ENCODE measurements at regions of chrX and their contacts with region 1.

Region 1: DNA sequence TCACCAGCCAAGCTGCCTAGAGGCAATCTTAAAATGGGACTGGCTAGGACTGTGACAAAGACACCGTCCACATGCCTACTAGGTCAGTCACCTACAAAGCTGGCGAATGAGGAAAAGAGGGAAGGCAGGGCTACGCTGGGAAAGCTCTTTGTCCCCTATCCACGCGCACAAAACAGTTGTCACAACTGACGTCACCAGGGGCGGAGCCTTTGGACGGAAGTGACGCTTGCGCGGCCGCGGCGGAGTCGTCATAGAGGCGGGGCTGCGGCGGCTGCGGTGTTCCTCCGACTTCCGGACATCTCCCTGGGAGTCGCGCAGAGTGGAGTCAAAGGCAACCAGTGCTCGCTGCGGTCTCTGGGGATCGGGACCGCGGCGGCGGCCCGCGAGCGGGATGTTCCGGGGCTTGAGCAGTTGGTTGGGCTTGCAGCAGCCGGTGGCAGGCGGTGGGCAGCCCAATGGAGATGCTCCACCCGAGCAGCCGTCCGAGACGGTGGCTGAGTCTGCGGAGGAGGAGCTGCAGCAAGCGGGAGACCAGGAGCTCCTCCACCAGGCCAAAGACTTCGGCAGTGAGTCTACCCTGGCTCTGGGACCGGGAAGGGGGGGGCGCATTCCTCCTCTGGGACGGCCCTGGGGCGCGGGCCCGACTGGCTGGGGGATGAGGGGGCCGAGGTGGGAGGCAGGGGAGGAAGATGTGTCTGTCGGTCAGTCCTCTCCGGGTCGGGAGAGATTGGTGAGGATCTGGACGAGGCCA is at the start of gene SYAP1:
- DNase-seq: peak; percentile 78
- H3K4me3 ChIP-seq: peak within 1 kb of the TSS; percentile 59 to 92 (median 71)
- H3K27ac ChIP-seq: peak within 1 kb of the TSS; percentile 90 to 97 (median 93)
- H3K4me1 ChIP-seq: peaks cover 11 to 27% (median 13%) of the 10 kb centered on the region in 3 donors
- H3K27me3 ChIP-seq: no peaks in the 10 kb centered on the region
- CTCF ChIP-seq: no peak
- POLR2A ChIP-seq: peak in 3 of 4 donors; percentile 91 to 96 (median 95)
- total RNA-seq, gene SYAP1: 16.2 to 22.8 (median 18.2) TPM

Region 2: DNA sequence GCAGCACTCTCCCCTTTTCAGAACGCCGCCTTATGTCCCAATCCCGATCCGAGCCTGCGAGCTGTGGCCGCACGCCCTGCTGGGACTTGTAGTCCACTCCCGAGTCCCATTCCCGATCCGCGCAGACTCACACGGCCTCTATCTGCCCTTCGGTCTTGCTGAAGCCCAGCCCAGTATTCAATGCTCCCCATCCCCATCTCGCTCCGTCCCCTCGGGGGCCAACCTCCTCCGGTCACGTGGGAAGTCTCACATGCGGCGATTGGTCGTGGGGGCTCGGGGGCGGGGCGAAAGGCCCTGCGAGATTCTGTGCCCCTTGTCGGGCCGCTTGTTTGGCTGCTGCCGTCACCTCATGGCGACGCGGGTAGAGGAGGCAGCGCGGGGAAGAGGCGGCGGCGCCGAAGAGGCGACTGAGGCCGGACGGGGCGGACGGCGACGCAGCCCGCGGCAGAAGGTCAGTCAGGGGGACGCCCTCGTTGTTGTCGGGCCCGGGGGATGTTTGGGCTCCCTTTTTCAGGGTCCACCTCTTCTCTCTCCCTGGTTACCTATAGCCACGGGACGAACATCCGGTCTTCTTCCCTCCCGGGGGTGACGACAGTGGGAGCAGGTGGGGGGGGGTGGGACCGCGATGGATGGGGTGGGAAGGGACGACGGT is 66.8 kb after region 1 on chrX and contains the start of gene TXLNG:
- intact Hi-C with region 1: loop called (anchors 10 kb)
- DNase-seq: peak; percentile 98
- H3K4me3 ChIP-seq: peak within 1 kb of the TSS; percentile 65 to 74 (median 66)
- H3K27ac ChIP-seq: peak within 1 kb of the TSS; percentile 81 to 91 (median 84)
- H3K4me1 ChIP-seq: peaks cover 3 to 28% (median 12%) of the 10 kb centered on the region in 3 donors
- H3K27me3 ChIP-seq: no peaks in the 10 kb centered on the region
- CTCF ChIP-seq: no peak
- POLR2A ChIP-seq: peak in 3 of 4 donors; percentile 36 to 89 (median 89)
- total RNA-seq, gene TXLNG: 6.4 to 14.9 (median 10.9) TPM

Measured in esophagus squamous epithelium (tissue), 5 donors.